Calu3 (cell line): ENCODE measurements at regions of chr17 and their contacts with region 1.

Region 1: DNA sequence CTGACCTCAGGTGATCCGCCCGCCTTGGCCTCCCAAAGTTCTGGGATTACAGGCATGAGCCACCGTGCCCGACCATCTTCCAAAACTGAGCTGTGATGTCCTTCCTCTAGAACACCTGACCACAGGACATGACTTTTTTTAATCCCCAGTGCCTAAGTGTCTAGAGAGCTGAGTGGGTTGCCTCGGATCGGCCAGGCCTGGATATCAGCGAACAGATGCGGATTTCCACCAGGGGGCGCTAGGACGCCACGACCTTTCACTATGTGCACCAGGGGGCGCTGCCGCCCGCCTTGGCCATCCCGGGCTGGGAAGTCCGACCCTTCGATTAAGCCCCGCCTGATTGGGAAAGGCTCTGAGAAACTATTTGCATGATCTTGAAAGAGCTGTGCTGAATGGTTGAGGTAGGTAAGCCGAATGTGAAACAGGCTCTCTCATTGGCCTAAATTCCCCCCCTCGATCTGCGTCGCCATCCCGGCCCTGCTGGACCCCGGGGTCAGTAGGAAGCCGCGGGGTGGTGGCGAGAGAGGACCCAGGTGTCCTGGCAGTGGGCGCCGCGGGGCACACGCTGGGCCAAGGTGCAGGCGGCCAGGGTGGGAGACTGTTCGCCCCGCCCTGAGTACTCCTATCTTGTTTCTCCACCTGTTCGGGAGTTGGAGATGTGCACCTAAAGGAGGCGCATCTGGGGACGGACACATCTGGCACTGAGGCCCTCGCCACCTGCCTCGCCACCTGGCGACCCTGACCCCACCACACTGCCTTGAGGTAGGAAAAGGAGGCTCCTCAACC is at the start of gene ACBD4:
- DNase-seq: peak; percentile 99
- H3K4me3 Mint-ChIP-seq: peak within 1 kb of the TSS; percentile 90
- H3K27ac Mint-ChIP-seq: peak within 1 kb of the TSS; percentile 81
- H3K4me1 Mint-ChIP-seq: peaks cover 29% of the 10 kb centered on the region
- H3K27me3 Mint-ChIP-seq: no peaks in the 10 kb centered on the region
- CTCF ChIP-seq: peak; percentile 100
- total RNA-seq, gene ACBD4: 21.8 and 23.2 TPM in 2 replicates

Region 2: GRCh38 chr17:45060797-45061605 is 74.4 kb before region 1 on chr17 and contains the start of gene NMT1:
- CTCF ChIA-PET with region 1: interaction called, 10 read pairs
- intact Hi-C with region 1: no loop called
- DNase-seq: peak; percentile 99
- H3K4me3 Mint-ChIP-seq: peak within 1 kb of the TSS; percentile 98
- H3K27ac Mint-ChIP-seq: peak within 1 kb of the TSS; percentile 100
- H3K4me1 Mint-ChIP-seq: peaks cover 17% of the 10 kb centered on the region
- H3K27me3 Mint-ChIP-seq: no peaks in the 10 kb centered on the region
- CTCF ChIP-seq: no peak
- total RNA-seq, gene NMT1: 185 and 216 TPM in 2 replicates

Region 3: GRCh38 chr17:45155029-45155428 is 19.6 kb after region 1 on chr17:
- CTCF ChIA-PET with region 1: interaction called, 197 read pairs
- intact Hi-C with region 1: no loop called
- DNase-seq: no peak
- H3K4me3 Mint-ChIP-seq: no peak overlapping the region
- H3K27ac Mint-ChIP-seq: no peak overlapping the region
- H3K4me1 Mint-ChIP-seq: peaks cover 47% of the 10 kb centered on the region
- H3K27me3 Mint-ChIP-seq: no peaks in the 10 kb centered on the region
- CTCF ChIP-seq: no peak

Region 4: GRCh38 chr17:45197555-45198334 is 62.4 kb after region 1 on chr17:
- CTCF ChIA-PET with region 1: interaction called, 163 read pairs
- intact Hi-C with region 1: loop called (anchors 1 kb)
- DNase-seq: peak; percentile 100
- H3K4me3 Mint-ChIP-seq: no peak overlapping the region
- H3K27ac Mint-ChIP-seq: peak overlapping the region; percentile 86
- H3K4me1 Mint-ChIP-seq: peaks cover 30% of the 10 kb centered on the region
- H3K27me3 Mint-ChIP-seq: no peaks in the 10 kb centered on the region
- CTCF ChIP-seq: peak; percentile 100

Region 5: GRCh38 chr17:45247429-45248131 is 112.2 kb after region 1 on chr17:
- CTCF ChIA-PET with region 1: interaction called, 14 read pairs
- intact Hi-C with region 1: no loop called
- DNase-seq: peak; percentile 100
- H3K4me3 Mint-ChIP-seq: peak overlapping the region; percentile 97
- H3K27ac Mint-ChIP-seq: peak overlapping the region; percentile 89
- H3K4me1 Mint-ChIP-seq: peaks cover 10% of the 10 kb centered on the region
- H3K27me3 Mint-ChIP-seq: no peaks in the 10 kb centered on the region
- CTCF ChIP-seq: no peak